Activated CD4-positive, alpha-beta memory T cell treated with anti-CD3 and anti-CD28 coated beads for 36 hours (primary cell): ENCODE measurements at regions of chr14 and their contacts with region 1.

Region 1: DNA sequence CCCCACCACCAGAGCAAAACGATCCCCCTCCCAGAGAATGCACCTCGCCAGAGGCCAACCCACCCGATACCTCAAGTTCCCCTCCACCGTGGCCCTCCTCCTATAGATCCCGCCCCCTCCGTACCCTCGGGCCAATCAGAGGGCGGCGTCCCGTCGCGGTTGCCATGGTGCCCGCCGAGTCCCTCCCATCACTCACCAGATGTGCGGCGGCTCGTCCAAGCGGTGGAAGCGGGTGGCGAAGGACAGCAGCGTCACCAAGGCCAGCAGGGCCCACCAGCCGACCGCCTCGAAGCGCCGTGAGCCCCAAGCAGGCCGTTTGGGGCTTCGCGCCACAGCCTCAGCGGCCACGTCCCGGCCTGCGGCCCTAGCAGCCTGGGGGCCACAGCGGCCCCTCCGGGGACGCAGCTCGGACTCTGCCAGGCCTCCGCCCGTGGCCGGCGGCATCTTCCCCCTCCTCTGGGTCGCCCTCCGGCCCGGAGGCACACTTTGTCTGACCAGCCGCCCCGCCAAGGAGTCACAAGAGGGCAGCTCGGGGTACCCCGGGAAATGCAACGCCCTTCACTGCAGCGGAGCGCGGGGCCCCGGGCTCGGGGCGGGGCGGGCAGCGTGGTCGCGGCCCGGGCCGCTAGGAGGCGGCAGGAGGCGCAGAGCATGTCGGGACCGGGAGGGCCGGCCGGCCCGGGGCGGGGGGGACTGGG is at the start of gene POMT2:
- DNase-seq: peak; percentile 95
- H3K4me3 Mint-ChIP-seq: peak within 1 kb of the TSS; percentile 93
- H3K27ac Mint-ChIP-seq: peak within 1 kb of the TSS; percentile 99
- H3K4me1 Mint-ChIP-seq: peaks cover 17% of the 10 kb centered on the region
- H3K27me3 Mint-ChIP-seq: no peaks in the 10 kb centered on the region
- total RNA-seq, gene POMT2: 12.9 to 13.1 TPM

Region 2: DNA sequence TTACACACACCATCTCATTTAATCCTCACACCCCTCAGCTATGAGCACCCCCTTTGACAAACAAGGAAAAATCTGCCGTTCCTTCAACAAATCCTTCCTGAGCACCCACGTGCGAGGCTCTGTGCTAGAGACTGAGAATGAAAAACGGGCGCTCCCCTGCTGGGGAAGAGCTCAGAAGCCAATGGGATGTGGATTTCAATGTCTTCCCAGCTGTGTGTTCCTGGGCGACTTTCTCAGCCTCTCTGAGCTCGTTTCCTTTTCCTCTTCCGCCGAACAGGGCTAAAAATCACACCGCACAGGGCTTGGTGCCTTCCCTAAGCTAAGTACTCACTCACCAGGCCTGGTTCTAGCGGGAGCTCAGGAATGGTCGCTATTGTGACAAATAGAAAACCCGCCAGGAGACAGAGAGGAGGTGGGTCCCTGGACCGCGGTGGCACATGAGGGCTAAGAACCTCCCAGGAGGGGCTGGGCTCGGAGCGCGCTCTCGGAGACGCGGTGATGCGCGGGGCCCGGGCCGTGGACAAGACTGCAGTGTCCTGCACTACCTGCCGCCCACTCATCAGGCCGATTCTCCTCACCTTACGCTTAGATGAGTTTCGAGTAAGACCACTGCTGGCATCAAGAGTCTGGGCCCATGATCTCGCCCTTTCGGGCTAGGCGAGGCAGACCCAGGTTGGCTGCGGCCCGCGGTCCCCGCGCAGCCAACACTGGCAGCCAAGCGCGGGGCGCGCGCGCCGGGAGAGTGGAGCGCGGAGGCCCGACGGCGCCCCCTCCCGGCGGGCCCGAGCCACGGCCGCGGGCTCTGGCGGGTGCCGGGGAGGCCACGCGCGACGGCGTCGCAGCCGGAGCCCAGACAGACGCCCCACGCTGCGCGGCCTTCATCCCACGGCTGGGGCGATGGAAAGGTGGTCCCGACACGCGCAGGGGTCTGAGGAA is 195.8 kb before region 1 on chr14:
- CTCF ChIA-PET with region 1: interaction called, 9 read pairs
- POLR2A ChIA-PET with region 1: no interaction called
- intact Hi-C with region 1: loop called (anchors 1 kb)
- DNase-seq: peak; percentile 77
- H3K4me3 Mint-ChIP-seq: peak overlapping the region; percentile 82
- H3K27ac Mint-ChIP-seq: peak overlapping the region; percentile 73
- H3K4me1 Mint-ChIP-seq: peaks cover 50% of the 10 kb centered on the region
- H3K27me3 Mint-ChIP-seq: peaks cover 2% of the 10 kb centered on the region

Region 3: GRCh38 chr14:77243853-77244252 is 76.5 kb before region 1 on chr14:
- CTCF ChIA-PET with region 1: no interaction called
- POLR2A ChIA-PET with region 1: no interaction called
- intact Hi-C with region 1: no loop called
- DNase-seq: no peak
- H3K4me3 Mint-ChIP-seq: no peak overlapping the region
- H3K27ac Mint-ChIP-seq: no peak overlapping the region
- H3K4me1 Mint-ChIP-seq: no peaks in the 10 kb centered on the region
- H3K27me3 Mint-ChIP-seq: peaks cover 2% of the 10 kb centered on the region

Region 4: DNA sequence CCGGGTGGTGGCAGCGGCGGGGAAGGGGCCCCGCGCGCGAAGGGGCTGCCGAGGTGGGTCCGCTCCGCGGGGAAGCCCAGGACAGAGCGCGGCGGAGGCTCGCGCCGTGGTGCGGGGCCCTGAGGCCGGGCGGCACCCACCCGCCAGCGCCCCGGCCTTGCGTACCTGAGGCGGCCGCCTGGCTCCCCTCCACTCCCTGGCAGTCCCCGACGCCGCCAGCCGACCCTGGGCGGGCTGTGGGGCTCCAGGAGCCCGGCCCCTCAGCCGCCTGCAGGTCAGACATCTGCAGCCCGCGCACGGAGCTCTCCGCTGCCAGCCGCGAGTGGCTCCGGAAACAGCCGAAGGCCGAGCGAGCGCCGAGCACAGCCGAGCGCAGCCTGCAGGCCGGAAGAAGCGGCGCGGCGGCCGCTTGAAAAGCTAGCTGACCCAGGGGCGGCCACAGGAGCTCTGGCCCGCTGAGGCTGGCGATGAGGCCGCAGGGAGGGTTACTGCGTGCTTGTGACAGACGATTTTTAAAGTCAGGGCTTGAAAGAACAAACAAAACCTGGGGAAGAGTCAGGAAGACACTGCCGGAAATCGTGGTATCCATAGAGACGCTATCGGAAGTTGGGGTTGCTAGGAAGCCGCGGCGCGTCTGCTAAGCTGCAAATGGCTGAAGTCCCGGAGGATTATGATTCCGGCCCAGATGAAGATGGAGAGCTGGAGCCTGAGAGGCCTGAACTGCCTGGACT is 56.5 kb after region 1 on chr14 and contains the starts of genes SAMD15 and TMED8:
- CTCF ChIA-PET with region 1: interaction called, 4 read pairs
- POLR2A ChIA-PET with region 1: interaction called, 14 read pairs
- intact Hi-C with region 1: loop called (anchors 1 kb)
- DNase-seq: peak; percentile 88
- H3K4me3 Mint-ChIP-seq: peak within 1 kb of the TSS; percentile 92
- H3K27ac Mint-ChIP-seq: peak within 1 kb of the TSS; percentile 82
- H3K4me1 Mint-ChIP-seq: peaks cover 42% of the 10 kb centered on the region
- H3K27me3 Mint-ChIP-seq: no peaks in the 10 kb centered on the region
- total RNA-seq, gene SAMD15: 0.38 TPM in 1 of 2 experiments, not detected in the other
- total RNA-seq, gene TMED8: 26.9 to 27.8 TPM

Region 5: GRCh38 chr14:77421201-77421600 is 100.8 kb after region 1 on chr14:
- CTCF ChIA-PET with region 1: no interaction called
- POLR2A ChIA-PET with region 1: no interaction called
- intact Hi-C with region 1: no loop called
- DNase-seq: no peak
- H3K4me3 Mint-ChIP-seq: no peak overlapping the region
- H3K27ac Mint-ChIP-seq: no peak overlapping the region
- H3K4me1 Mint-ChIP-seq: no peaks in the 10 kb centered on the region
- H3K27me3 Mint-ChIP-seq: no peaks in the 10 kb centered on the region

Region 6: DNA sequence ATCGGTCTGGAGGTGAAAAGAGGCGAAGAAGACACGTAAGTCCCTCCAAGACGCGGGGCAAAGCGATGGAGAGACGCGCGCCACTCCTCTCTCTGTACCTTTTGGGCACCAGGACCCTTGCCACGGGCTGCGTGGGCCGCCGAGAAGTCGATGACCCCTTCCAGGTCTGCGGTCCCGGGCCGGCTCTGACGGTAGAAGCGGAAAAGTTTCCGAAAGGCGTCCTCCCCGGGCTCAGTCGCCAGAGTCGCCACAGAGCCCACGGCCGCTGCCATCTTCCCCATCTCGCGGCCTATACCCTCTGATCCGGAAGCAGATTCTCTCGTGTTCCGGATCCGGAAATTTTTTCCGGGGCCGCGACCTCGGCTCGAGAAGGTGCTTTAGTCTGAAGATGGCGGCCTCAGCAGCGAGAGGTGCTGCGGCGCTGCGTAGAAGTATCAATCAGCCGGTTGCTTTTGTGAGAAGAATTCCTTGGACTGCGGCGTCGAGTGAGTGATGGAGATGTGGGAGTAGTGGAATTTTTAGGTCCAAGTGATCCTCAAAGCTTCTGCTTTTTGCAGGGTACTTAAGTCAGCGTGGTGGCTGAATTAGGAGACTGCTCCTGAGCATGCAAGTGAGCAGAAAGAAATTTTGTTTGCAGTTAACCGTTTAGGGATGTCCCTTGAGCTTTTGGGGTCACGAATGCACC is 387.5 kb after region 1 on chr14 and contains the starts of genes ALKBH1 and SLIRP:
- CTCF ChIA-PET with region 1: interaction called, 3 read pairs
- POLR2A ChIA-PET with region 1: no interaction called
- intact Hi-C with region 1: loop called (anchors 1 kb)
- DNase-seq: peak; percentile 93
- H3K4me3 Mint-ChIP-seq: peak within 1 kb of the TSS; percentile 90
- H3K27ac Mint-ChIP-seq: peak within 1 kb of the TSS; percentile 86
- H3K4me1 Mint-ChIP-seq: peaks cover 45% of the 10 kb centered on the region
- H3K27me3 Mint-ChIP-seq: no peaks in the 10 kb centered on the region
- total RNA-seq, gene ALKBH1: 13.2 to 16.1 TPM
- total RNA-seq, gene SLIRP: 138 to 146 TPM

Region 7: GRCh38 chr14:77799863-77800730 is 479.7 kb after region 1 on chr14 and contains the start of gene ADCK1:
- CTCF ChIA-PET with region 1: no interaction called
- POLR2A ChIA-PET with region 1: no interaction called
- intact Hi-C with region 1: loop called (anchors 1 kb)
- DNase-seq: peak; percentile 90
- H3K4me3 Mint-ChIP-seq: peak within 1 kb of the TSS; percentile 86
- H3K27ac Mint-ChIP-seq: peak within 1 kb of the TSS; percentile 84
- H3K4me1 Mint-ChIP-seq: peaks cover 11% of the 10 kb centered on the region
- H3K27me3 Mint-ChIP-seq: no peaks in the 10 kb centered on the region
- total RNA-seq, gene ADCK1: 3.2 to 3.7 TPM